ENCODE measurements at regions of chr3 and their contacts with region 1.

Region 1: DNA sequence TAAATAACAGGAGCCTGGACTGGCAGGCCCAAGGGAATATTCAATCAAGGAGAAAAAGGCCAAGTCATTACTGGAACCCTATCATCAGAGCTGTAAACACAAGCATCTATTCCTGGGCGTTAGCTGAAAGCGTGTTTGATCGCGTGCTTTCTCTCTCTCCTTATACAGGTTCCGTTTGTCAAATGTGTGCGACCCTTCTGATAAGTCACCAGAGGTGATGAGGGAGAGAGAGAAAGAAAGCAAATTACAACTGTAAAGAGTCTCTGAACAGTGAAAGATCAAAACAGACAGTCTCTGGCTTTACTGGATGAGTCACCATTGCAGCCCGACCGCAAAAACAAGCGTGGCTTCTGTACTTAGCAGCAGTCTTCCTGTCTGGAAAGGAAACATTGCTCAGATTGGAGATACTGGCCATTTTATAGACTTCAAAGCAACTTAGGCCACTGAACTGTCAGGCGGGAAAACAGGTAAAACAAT is 39.5 kb upstream of the TPRG1 start:
- DNase-seq: peak; percentile 70 to 93 (median 77)
- H3K4me3 ChIP-seq: peak overlapping the region in 1 of 2 donors; percentile 5
- H3K4me3 Mint-ChIP-seq: peak overlapping the region; percentile 64 to 91 (median 78)
- H3K27ac ChIP-seq: peak overlapping the region; percentile 62
- H3K27ac Mint-ChIP-seq: peak overlapping the region; percentile 87 to 98 (median 94)
- H3K4me1 ChIP-seq: peaks cover 30% of the 10 kb centered on the region
- H3K4me1 Mint-ChIP-seq: peaks cover 25 to 51% (median 39%) of the 10 kb centered on the region in 4 donors
- H3K27me3 ChIP-seq: no peaks in the 10 kb centered on the region
- H3K27me3 Mint-ChIP-seq: no peaks in the 10 kb centered on the region

Region 2: DNA sequence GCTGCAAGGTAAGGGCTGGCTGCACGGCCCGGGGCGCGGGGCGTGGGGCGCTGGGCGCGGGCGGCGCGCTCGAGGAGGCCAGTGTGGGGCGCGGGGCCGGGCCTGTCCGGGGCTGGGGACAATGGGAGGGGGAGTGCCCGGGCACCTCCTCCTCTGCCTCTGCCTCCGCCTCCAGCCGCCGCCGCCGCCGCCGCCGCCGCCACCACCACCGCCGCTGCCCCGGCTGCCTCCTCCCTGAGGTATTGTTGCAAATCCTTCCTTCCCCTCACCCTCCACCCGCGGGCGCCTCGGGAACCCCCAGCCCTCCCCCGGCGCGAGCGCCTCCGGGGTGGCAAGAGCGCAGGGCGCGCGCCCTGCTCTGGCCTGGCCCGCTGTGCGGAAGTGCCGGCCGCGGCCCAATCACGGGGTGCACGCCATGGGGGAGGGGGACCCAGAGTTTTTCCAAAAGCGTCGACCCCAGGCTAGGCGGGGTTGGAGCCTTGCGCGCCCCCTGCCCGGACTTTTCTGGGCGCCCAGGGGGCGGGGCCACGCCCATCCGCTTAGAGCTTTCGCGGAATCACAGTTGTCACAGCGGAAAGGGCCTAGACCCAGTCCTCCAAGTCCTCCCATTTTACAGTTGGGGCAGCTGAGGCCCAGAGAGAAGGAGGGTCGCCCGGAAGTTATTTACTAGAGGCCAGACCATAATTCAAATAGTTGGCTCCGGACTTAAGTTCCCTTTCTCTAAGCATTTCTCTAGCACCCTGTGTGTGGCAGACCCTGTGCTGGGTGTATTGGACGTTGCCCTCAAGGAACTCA is 978.1 kb before region 1 on chr3 and contains the start of gene LPP:
- CTCF ChIA-PET with region 1: no interaction called
- POLR2A ChIA-PET with region 1: no interaction called
- intact Hi-C with region 1: loop called (anchors 10 kb)
- DNase-seq: peak; percentile 80 to 94 (median 83)
- H3K4me3 ChIP-seq: peak within 1 kb of the TSS; percentile 67 to 79
- H3K4me3 Mint-ChIP-seq: peak within 1 kb of the TSS; percentile 86 to 96 (median 91)
- H3K27ac ChIP-seq: peak within 1 kb of the TSS; percentile 76
- H3K27ac Mint-ChIP-seq: peak within 1 kb of the TSS; percentile 91 to 96 (median 92)
- H3K4me1 ChIP-seq: peaks cover 53% of the 10 kb centered on the region
- H3K4me1 Mint-ChIP-seq: peaks cover 44 to 72% (median 53%) of the 10 kb centered on the region in 4 donors
- H3K27me3 ChIP-seq: no peaks in the 10 kb centered on the region
- H3K27me3 Mint-ChIP-seq: no peaks in the 10 kb centered on the region
- total RNA-seq, gene LPP: 24.3 to 25.0 TPM

Region 3: DNA sequence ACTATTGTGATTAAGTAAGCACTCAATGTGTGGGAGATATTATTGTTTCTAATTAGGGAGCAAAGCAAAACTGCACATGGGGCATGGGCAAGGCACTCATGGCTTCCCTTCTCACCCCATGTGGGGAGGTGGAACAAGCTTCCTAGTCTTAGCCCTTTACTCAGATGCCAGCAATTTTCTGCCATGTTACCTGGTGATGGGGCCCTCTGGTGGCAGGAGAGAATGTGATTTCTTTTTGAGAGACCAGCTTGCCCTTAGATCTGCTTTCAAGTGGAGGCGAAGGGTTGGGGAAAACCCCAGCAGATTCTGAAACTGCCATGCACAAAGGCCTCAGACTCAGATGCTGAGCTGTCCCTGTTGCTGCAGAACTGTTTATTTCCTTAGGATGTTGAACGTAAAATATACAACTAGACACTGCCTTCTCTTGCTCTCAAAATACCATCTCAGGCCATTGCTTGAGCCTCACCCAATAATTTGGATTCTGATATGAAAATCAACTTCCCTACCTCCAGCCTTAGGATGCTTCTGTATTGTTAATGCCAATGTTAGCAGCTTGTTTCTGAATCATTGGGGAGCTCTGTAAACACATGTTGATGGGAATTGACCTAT is 90.7 kb before region 1 on chr3:
- CTCF ChIA-PET with region 1: interaction called, 128 read pairs
- POLR2A ChIA-PET with region 1: interaction called, 40 read pairs
- intact Hi-C with region 1: loop called (anchors 1 kb)
- DNase-seq: peak; percentile 72 to 82 (median 78)
- H3K4me3 ChIP-seq: no peak overlapping the region
- H3K4me3 Mint-ChIP-seq: no peak overlapping the region
- H3K27ac ChIP-seq: peak overlapping the region; percentile 52
- H3K27ac Mint-ChIP-seq: peak overlapping the region; percentile 8 to 87 (median 50)
- H3K4me1 ChIP-seq: peaks cover 7% of the 10 kb centered on the region
- H3K4me1 Mint-ChIP-seq: peaks cover 6 to 11% (median 8%) of the 10 kb centered on the region in 4 donors
- H3K27me3 ChIP-seq: no peaks in the 10 kb centered on the region
- H3K27me3 Mint-ChIP-seq: no peaks in the 10 kb centered on the region

Region 4: DNA sequence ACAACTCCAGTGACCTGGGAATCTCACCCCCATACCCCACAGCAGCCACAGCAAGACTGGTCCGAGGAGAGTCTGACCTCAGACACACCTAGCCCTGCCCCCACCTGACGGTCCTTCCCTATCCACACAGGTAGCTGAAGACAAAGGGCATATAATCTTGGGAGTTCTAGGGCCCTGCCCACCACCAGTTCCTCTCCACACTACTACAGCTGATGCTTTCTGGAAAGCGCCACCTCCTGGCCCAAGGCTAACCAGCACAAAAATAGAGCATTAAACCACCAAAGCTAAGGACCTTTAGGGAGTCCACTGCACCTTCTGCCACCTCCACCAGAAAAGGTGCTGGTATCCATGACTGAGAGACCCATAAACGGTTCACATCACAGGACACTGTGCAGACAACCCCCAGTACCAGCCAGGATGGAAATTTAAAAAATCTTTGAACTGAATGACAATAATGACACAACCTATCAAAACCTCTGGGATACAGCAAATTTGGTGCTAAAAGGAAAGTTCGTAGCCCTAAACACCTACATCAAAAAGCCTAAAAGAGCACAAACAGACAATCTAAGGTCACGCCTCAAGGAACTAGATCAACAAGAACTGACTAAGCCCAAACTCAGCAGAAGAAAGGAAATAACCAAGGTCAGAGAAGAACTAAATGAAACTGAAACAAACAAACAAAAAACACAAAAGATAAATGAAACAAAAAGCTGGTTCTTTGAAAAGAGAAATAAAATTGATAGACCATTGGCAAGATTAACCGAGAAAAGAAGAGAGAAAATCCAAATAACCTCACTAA is 82.6 kb before region 1 on chr3:
- CTCF ChIA-PET with region 1: interaction called, 128 read pairs
- POLR2A ChIA-PET with region 1: interaction called, 12 read pairs
- intact Hi-C with region 1: no loop called
- DNase-seq: peak; percentile 22 to 51 (median 36)
- H3K4me3 ChIP-seq: no peak overlapping the region
- H3K4me3 Mint-ChIP-seq: peak overlapping the region; percentile 26 to 80 (median 69)
- H3K27ac ChIP-seq: no peak overlapping the region
- H3K27ac Mint-ChIP-seq: peak overlapping the region; percentile 33 to 95 (median 88)
- H3K4me1 ChIP-seq: peaks cover 20% of the 10 kb centered on the region
- H3K4me1 Mint-ChIP-seq: peaks cover 13 to 29% (median 20%) of the 10 kb centered on the region in 4 donors
- H3K27me3 ChIP-seq: no peaks in the 10 kb centered on the region
- H3K27me3 Mint-ChIP-seq: peaks cover 0 to 3% of the 10 kb centered on the region in 2 donors

Region 5: GRCh38 chr3:189099505-189100290 is 32.6 kb before region 1 on chr3:
- CTCF ChIA-PET with region 1: no interaction called
- POLR2A ChIA-PET with region 1: no interaction called
- intact Hi-C with region 1: no loop called
- DNase-seq: no peak
- H3K4me3 ChIP-seq: no peak overlapping the region
- H3K4me3 Mint-ChIP-seq: no peak overlapping the region
- H3K27ac ChIP-seq: no peak overlapping the region
- H3K27ac Mint-ChIP-seq: no peak overlapping the region
- H3K4me1 ChIP-seq: no peaks in the 10 kb centered on the region
- H3K4me1 Mint-ChIP-seq: no peaks in the 10 kb centered on the region
- H3K27me3 ChIP-seq: no peaks in the 10 kb centered on the region
- H3K27me3 Mint-ChIP-seq: peaks cover 0 to 3% of the 10 kb centered on the region in 2 donors

Region 6: DNA sequence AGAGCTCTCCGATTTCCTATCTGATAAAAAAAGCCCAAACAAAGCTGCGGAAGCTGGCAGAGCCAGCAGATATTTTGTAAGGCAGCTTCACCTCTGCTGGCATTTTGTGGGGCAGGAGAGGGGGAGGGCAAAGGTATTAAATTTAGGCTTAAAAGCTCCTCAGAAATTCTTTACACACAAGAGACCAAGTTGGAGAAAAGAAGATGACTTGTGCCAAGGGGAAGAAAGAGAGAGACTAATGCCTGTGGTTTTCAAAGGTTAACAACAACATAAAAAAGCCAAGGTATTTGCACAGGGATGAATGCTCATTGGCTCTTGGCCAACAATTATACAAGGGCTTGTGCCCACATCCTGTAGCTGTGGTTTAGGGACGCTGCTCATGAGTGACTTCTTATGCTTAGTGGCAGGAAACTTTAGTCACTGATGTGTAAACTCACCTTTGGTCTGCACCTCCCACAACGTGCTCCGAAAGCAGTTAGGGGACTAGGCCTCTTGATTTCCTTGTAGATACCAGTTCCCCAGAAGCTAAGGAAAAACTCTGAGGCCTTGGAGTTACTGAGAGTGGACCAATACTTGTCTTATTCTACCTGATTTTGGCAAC is 192.4 kb after region 1 on chr3:
- CTCF ChIA-PET with region 1: no interaction called
- POLR2A ChIA-PET with region 1: interaction called, 4 read pairs
- intact Hi-C with region 1: loop called (anchors 10 kb)
- DNase-seq: peak; percentile 89 to 94 (median 93)
- H3K4me3 ChIP-seq: peak overlapping the region in 1 of 2 donors; percentile 6
- H3K4me3 Mint-ChIP-seq: peak overlapping the region; percentile 75 to 90 (median 84)
- H3K27ac ChIP-seq: peak overlapping the region; percentile 31
- H3K27ac Mint-ChIP-seq: peak overlapping the region; percentile 91 to 97 (median 96)
- H3K4me1 ChIP-seq: peaks cover 59% of the 10 kb centered on the region
- H3K4me1 Mint-ChIP-seq: peaks cover 43 to 66% (median 48%) of the 10 kb centered on the region in 4 donors
- H3K27me3 ChIP-seq: no peaks in the 10 kb centered on the region
- H3K27me3 Mint-ChIP-seq: no peaks in the 10 kb centered on the region

Measured in CD4-positive, alpha-beta memory T cell (primary cell).